ENCODE measurements at regions of chr2 and their contacts with region 1.

Region 1: DNA sequence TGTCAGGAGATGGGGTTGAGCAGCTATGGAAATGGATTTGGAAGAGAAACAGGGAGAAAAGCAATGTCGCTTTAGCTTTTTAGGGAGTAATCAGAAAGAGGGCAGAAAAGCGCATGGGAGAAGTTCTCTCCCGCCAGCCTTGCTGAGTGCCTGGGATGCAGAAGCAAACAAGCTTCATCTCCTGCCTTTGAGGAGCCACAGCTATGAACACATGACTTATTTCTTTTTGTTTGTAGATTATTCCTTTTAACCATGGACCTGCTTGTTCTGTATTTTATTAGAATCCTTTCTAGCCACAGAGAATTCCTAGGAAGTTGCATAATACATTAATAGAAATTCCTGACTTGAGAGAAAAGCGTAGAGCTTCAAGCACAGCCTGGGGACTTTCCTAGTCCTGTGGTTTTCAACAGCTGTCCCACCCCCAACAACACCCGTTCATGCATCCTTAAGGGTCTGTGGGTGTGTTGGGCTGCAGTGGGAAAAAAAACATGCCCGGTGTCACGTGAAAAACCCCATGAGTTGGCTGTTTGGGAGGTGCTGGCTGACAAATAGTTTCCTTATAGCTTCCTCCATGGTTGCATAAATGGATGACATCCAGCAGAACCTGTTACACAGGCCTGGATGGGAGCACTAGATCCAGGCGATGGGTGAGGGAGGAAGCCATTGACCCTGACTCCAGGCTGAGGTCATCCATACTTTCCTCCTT is 14.9 kb downstream of the SLC9A4 start:
- DNase-seq: peak; percentile 58 to 69
- H3K4me3 ChIP-seq: no peak overlapping the region
- H3K27ac ChIP-seq: peak overlapping the region in 4 of 5 donors; percentile 41 to 73 (median 48)
- H3K4me1 ChIP-seq: peaks cover 0 to 18% (median 6%) of the 10 kb centered on the region in 4 donors
- H3K27me3 ChIP-seq: no peaks in the 10 kb centered on the region
- CTCF ChIP-seq: no peak
- EP300 ChIP-seq: no peak
- POLR2A ChIP-seq: no peak

Region 2: GRCh38 chr2:101577173-101577572 is 910.7 kb before region 1 on chr2:
- intact Hi-C with region 1: no loop called
- DNase-seq: peak in 1 of 2 donors; percentile 49
- H3K4me3 ChIP-seq: no peak overlapping the region
- H3K27ac ChIP-seq: no peak overlapping the region
- H3K4me1 ChIP-seq: peaks cover 0 to 11% (median 4%) of the 10 kb centered on the region in 4 donors
- H3K27me3 ChIP-seq: no peaks in the 10 kb centered on the region
- CTCF ChIP-seq: no peak
- EP300 ChIP-seq: no peak
- POLR2A ChIP-seq: no peak

Region 3: DNA sequence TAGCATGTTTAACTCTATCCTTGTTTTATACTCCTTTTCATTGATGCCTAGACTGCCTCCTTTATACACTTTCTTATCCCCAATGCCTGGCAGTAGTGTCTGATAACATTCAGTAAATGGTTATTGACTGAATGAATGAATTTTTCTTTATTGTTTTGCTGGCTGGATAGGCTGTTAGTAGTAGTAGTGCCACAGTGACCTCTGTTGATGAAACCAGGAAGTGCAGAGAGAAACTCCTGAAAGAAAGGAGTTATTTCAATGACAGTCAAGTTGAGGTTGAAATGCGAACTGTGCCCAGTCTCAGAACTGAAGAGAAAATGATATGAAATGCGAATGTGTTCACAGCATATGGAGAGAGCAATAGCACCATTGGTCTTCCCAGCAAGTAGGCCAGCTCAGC is 104.7 kb after region 1 on chr2:
- intact Hi-C with region 1: loop called (anchors 10 kb)
- DNase-seq: peak; percentile 71 to 74
- H3K4me3 ChIP-seq: no peak overlapping the region
- H3K27ac ChIP-seq: peak overlapping the region; percentile 26 to 85 (median 77)
- H3K4me1 ChIP-seq: peaks cover 4 to 62% (median 30%) of the 10 kb centered on the region in 4 donors
- H3K27me3 ChIP-seq: no peaks in the 10 kb centered on the region
- CTCF ChIP-seq: peak in 5 of 7 experiments; percentile 38 to 77 (median 61)
- EP300 ChIP-seq: no peak
- POLR2A ChIP-seq: no peak

Measured in stomach (tissue), 19 donors.